Aorta (tissue), 5 donors: ENCODE measurements at regions of chr15 and their contacts with region 1.

Region 1: DNA sequence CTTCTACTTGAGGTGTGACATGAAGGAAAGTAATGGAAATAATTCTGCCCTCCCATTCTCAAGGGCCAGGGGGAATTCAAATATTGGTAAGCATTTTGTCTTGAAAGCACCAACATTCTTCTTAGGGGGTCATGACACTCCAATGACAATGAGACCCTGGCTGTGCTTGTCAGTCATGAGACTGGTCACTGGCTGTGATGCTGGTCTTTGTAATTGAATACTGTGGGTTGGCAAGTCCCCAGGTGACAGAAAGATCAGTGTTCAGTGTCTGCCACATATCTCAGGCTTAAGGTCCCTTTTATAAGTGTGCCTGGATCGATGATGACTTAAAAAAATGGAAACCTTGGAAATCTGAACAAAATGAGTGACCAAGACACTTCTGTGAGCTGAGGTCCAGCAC is 151.4 kb downstream of the SNRPN start:
- DNase-seq: no peak
- ATAC-seq: no peak
- H3K4me3 ChIP-seq: no peak overlapping the region
- H3K27ac ChIP-seq: no peak overlapping the region
- H3K4me1 ChIP-seq: no peaks in the 10 kb centered on the region
- H3K27me3 ChIP-seq: no peaks in the 10 kb centered on the region

Region 2: DNA sequence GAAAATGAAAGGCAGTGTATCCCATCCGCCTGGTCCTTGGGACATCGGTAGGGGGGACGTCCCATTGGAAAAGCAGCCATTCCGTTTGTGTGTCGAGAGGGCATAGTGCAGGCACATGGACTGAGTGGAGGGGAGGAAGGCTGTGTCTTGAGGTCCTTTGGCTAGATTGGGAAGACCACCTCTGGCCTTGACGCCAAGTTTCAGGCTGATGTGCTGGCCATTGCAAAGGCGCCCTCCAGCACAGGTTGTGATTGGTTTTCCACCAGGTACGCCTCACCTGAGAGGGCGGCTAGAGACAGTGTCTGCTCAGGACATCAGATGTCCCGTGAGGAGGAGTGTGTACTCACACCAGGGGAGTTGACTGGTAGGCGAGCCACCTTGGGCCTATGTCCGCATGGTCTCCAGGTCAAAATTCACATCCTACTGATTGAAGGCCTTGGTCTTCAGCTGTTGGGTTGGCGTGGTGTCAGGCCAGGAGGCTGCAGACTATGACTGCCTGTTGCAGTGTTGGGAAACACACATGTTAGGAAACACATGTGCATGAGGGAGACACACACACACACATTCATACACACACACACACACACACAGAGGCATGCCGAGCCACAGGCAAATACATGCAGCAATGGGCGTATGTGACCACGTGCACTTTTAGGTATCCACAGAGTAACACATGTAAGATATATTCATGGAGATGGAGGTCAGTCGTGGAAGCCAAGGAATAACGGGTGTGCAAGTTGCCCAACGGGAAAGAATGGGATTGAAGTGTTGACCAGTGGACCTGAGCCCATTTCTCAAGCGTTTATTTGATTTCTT is 53.0 kb before region 1 on chr15:
- intact Hi-C with region 1: loop called in 1 of 2 experiments (anchors 10 kb)
- DNase-seq: peak in 1 of 2 donors; percentile 38
- ATAC-seq: no peak
- H3K4me3 ChIP-seq: no peak overlapping the region
- H3K27ac ChIP-seq: no peak overlapping the region
- H3K4me1 ChIP-seq: no peaks in the 10 kb centered on the region
- H3K27me3 ChIP-seq: no peaks in the 10 kb centered on the region

Region 3: GRCh38 chr15:25065876-25066275 is 40.3 kb before region 1 on chr15:
- intact Hi-C with region 1: no loop called
- DNase-seq: peak in 1 of 2 donors; percentile 48
- ATAC-seq: no peak
- H3K4me3 ChIP-seq: no peak overlapping the region
- H3K27ac ChIP-seq: no peak overlapping the region
- H3K4me1 ChIP-seq: no peaks in the 10 kb centered on the region
- H3K27me3 ChIP-seq: no peaks in the 10 kb centered on the region